ENCODE measurements at regions of chr14 and their contacts with region 1.

Region 1: DNA sequence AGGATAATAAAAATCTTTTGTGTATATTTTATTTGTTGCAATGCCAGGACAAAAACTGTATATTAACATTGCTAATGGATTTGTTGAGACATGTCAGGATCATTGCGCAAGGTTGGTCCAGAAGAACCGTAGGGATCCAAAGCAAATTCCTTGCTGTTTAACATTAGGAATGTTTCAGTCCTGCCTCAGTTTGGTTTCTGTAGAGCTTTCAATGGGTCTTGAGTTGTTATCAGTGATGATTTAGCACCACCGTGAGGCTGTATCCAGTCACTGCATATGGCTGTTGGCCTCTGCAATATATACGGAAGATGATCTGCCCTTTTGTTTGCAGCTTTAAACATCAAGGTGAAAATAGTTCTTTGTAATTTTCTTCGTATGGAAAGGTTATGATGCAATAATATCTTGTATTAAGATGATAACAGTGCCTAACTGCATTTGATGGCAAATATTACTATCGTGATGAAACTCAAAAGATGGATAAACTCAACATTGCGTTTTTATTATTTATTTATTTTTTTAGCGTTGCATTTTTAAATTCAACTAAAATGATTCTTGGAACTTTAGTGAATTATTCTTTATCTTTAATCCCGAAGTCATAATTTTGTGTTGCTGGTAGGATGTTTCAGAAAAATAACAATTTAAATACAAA is 231.2 kb downstream of the AKAP6 start:
- DNase-seq: no peak
- H3K4me3 Mint-ChIP-seq: no peak overlapping the region
- H3K27ac Mint-ChIP-seq: no peak overlapping the region
- H3K4me1 Mint-ChIP-seq: peaks cover 4% of the 10 kb centered on the region
- H3K27me3 Mint-ChIP-seq: no peaks in the 10 kb centered on the region

Region 2: DNA sequence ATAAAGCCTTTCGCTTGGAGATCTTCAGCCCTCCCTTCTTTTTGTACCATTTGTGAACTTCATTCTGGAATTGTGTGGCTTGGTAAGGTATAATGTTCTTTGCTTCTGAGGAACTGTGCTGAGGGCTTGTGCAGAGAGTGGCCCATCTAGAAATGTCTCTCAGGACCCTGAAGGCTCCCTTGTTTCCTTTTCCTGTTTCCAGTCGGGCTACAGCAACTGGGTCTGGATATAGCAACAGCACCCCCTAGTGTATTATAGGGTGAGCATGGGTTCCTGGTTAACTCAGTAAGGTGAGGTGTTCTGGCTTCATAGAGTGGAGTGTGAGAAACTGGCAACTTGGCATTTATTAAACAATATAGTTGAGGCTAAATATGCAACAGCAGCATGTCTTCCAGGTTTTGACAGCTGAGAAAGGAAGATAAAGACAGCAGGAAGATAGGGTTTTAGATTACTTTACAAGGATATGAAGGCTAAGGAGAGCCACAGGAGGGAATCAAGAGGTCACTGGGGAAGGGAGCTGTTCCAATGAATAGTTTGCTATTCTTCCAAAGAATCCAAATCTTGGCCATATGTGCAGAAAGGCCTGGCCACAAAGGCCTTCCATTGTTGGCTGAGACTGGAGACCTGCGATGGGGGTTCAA is 308.2 kb before region 1 on chr14:
- intact Hi-C with region 1: loop called (anchors 5 kb)
- DNase-seq: peak; percentile 28
- H3K4me3 Mint-ChIP-seq: no peak overlapping the region
- H3K27ac Mint-ChIP-seq: no peak overlapping the region
- H3K4me1 Mint-ChIP-seq: no peaks in the 10 kb centered on the region
- H3K27me3 Mint-ChIP-seq: no peaks in the 10 kb centered on the region

Measured in activated T-helper 2 cell treated with anti-CD3 and anti-CD28 coated beads, Interferon-gamma antibody, Interleukin-2, Interleukin-4, amounts not matched to agents 10 μg/mL and 5 μg/mL and 100 μg/mL, durations not matched to agents 14 hours and 24 hours and 36 hours (primary cell).